HEK293 (cell line): ENCODE measurements at regions of chr17 and their contacts with region 1.

Region 1: GRCh38 chr17:68613739-68614298 is 12.7 kb upstream of the FAM20A start:
- H3K4me3 ChIP-seq: no peak overlapping the region
- H3K27ac ChIP-seq: no peak overlapping the region
- H3K4me1 ChIP-seq: no peaks in the 10 kb centered on the region
- CTCF ChIP-seq: 0 out of 2 replicates have a peak, but pooled peaks have one; percentile 14

Region 2: GRCh38 chr17:68533887-68534694 is 79.7 kb before region 1 on chr17:
- CTCF ChIA-PET with region 1: interaction called, 23 read pairs
- POLR2A ChIA-PET with region 1: interaction called, 4 read pairs
- H3K4me3 ChIP-seq: no peak overlapping the region
- H3K27ac ChIP-seq: no peak overlapping the region
- H3K4me1 ChIP-seq: no peaks in the 10 kb centered on the region
- CTCF ChIP-seq: no peak

Region 3: DNA sequence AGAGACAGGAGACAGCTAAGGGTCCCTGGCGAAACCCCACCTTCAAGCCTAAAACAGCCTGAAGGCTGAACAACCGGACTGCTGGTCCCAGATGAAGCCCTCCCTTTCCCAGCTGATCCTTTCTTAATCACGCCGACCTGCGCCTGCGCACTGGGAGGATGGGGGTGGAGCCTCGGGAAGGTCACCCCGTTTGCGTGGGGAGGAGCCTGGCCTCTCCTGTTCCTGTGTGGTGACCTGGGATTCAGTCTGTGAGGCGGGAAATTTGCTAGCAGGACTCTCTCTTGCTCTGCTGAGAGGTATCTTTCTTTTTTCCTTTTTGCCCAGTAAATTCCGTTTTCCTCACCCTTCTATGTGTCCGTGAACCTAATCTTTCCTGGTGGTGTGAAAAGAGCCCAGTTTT is 22.2 kb before region 1 on chr17:
- CTCF ChIA-PET with region 1: interaction called, 16 read pairs
- POLR2A ChIA-PET with region 1: no interaction called
- H3K4me3 ChIP-seq: no peak overlapping the region
- H3K27ac ChIP-seq: no peak overlapping the region
- H3K4me1 ChIP-seq: peaks cover 3% of the 10 kb centered on the region
- CTCF ChIP-seq: no peak

Region 4: DNA sequence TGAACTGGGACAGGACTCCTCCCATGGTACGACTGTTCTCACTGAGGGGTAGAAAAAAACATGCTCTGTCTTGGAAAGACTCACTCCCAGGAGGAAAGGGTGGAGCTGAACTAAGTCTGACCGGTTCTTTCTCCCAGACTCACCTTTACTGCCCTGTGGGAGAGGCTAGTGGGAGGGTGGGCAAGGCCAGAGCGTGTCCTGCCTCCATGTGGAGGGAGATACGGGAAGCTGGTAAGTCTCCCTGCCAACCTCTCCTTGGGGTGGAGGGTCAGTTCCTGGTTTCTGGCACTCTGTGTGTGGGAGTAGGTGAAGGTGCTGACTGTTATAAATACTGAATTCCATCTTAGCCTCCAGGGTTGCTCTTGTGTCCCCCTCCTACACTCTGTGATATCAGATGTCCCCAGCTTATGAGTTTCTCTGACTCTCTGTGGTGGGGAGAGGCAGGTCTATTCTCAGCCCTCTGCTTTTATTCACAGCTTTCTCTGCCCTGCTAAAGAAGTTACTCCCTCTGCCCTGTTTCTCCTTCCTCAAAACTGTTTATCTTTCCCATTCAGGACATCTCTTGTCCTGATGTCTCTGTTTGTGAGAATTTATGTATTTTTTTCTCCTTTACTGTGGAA is 14.2 kb after region 1 on chr17:
- CTCF ChIA-PET with region 1: interaction called, 18 read pairs
- POLR2A ChIA-PET with region 1: no interaction called
- H3K4me3 ChIP-seq: no peak overlapping the region
- H3K27ac ChIP-seq: no peak overlapping the region
- H3K4me1 ChIP-seq: 0 out of 2 replicates have a peak, but pooled peaks cover 4% of the 10 kb centered on the region
- CTCF ChIP-seq: no peak